HepG2 (cell line): ENCODE measurements at regions of chr7 and their contacts with region 1.

Region 1: GRCh38 chr7:140230861-140231770 is 54.3 kb upstream of the KDM7A start:
- DNase-seq: peak; percentile 93
- ATAC-seq: peak; percentile 78
- H3K4me3 ChIP-seq: peak overlapping the region; percentile 57 to 76 (median 60)
- H3K27ac ChIP-seq: peak overlapping the region; percentile 99
- H3K4me1 ChIP-seq: peaks cover 86% of the 10 kb centered on the region
- H3K27me3 ChIP-seq: no peaks in the 10 kb centered on the region
- CTCF ChIP-seq: peak; percentile 83
- EP300 ChIP-seq: peak in 1 of 2 experiments; percentile 44; a peak in 1 of 4 replicates
- POLR2A ChIP-seq: peak; percentile 43 to 86; a peak in 3 of 4 replicates
- RAD21 ChIP-seq: 0 out of 2 replicates have a peak, but pooled peaks have one; percentile 21

Region 2: GRCh38 chr7:139557857-139558581 is 673.1 kb before region 1 on chr7:
- CTCF ChIA-PET with region 1: no interaction called
- POLR2A ChIA-PET with region 1: no interaction called
- in situ Hi-C with region 1: no loop called
- intact Hi-C with region 1: no loop called
- DNase-seq: no peak
- ATAC-seq: peak; percentile 36
- H3K4me3 ChIP-seq: no peak overlapping the region
- H3K27ac ChIP-seq: no peak overlapping the region
- H3K4me1 ChIP-seq: no peaks in the 10 kb centered on the region
- H3K27me3 ChIP-seq: no peaks in the 10 kb centered on the region
- CTCF ChIP-seq: peak; percentile 44
- EP300 ChIP-seq: no peak
- POLR2A ChIP-seq: no peak
- RAD21 ChIP-seq: no peak

Region 3: GRCh38 chr7:140036224-140036962 is 194.7 kb before region 1 on chr7:
- CTCF ChIA-PET with region 1: no interaction called
- POLR2A ChIA-PET with region 1: no interaction called
- in situ Hi-C with region 1: no loop called
- intact Hi-C with region 1: no loop called
- DNase-seq: no peak
- ATAC-seq: no peak
- H3K4me3 ChIP-seq: no peak overlapping the region
- H3K27ac ChIP-seq: no peak overlapping the region
- H3K4me1 ChIP-seq: no peaks in the 10 kb centered on the region
- H3K27me3 ChIP-seq: no peaks in the 10 kb centered on the region
- CTCF ChIP-seq: no peak
- EP300 ChIP-seq: no peak
- POLR2A ChIP-seq: no peak
- RAD21 ChIP-seq: no peak

Region 4: GRCh38 chr7:140220181-140220522 is 11.0 kb before region 1 on chr7:
- CTCF ChIA-PET with region 1: no interaction called
- POLR2A ChIA-PET with region 1: interaction called, 16 read pairs
- in situ Hi-C with region 1: no loop called
- intact Hi-C with region 1: no loop called
- DNase-seq: no peak
- ATAC-seq: no peak
- H3K4me3 ChIP-seq: no peak overlapping the region
- H3K27ac ChIP-seq: no peak overlapping the region
- H3K4me1 ChIP-seq: peaks cover 67% of the 10 kb centered on the region
- H3K27me3 ChIP-seq: no peaks in the 10 kb centered on the region
- CTCF ChIP-seq: no peak
- EP300 ChIP-seq: no peak
- POLR2A ChIP-seq: no peak
- RAD21 ChIP-seq: no peak

Region 5: GRCh38 chr7:140242057-140243031 is 11.2 kb after region 1 on chr7:
- CTCF ChIA-PET with region 1: no interaction called
- POLR2A ChIA-PET with region 1: interaction called, 16 read pairs
- in situ Hi-C with region 1: no loop called
- intact Hi-C with region 1: no loop called
- DNase-seq: peak; percentile 20
- ATAC-seq: peak; percentile 75
- H3K4me3 ChIP-seq: peak overlapping the region in 2 of 3 experiments; percentile 5 to 32; a peak in 1 of 6 replicates
- H3K27ac ChIP-seq: peak overlapping the region; percentile 49
- H3K4me1 ChIP-seq: peaks cover 84% of the 10 kb centered on the region
- H3K27me3 ChIP-seq: no peaks in the 10 kb centered on the region
- CTCF ChIP-seq: no peak
- EP300 ChIP-seq: no peak
- POLR2A ChIP-seq: no peak
- RAD21 ChIP-seq: no peak

Region 6: GRCh38 chr7:140249036-140249806 is 18.1 kb after region 1 on chr7:
- CTCF ChIA-PET with region 1: no interaction called
- POLR2A ChIA-PET with region 1: interaction called, 64 read pairs
- in situ Hi-C with region 1: no loop called
- intact Hi-C with region 1: loop called (anchors 2 kb)
- DNase-seq: peak; percentile 95
- ATAC-seq: peak; percentile 59
- H3K4me3 ChIP-seq: peak overlapping the region in 1 of 3 experiments; percentile 9; a peak in 1 of 6 replicates
- H3K27ac ChIP-seq: peak overlapping the region; percentile 68
- H3K4me1 ChIP-seq: peaks cover 95% of the 10 kb centered on the region
- H3K27me3 ChIP-seq: no peaks in the 10 kb centered on the region
- CTCF ChIP-seq: no peak
- EP300 ChIP-seq: peak; percentile 70 to 94; a peak in 3 of 4 replicates
- POLR2A ChIP-seq: no peak
- RAD21 ChIP-seq: no peak

Region 7: GRCh38 chr7:140304191-140304799 is 73.2 kb after region 1 on chr7:
- CTCF ChIA-PET with region 1: no interaction called
- POLR2A ChIA-PET with region 1: interaction called, 6 read pairs
- in situ Hi-C with region 1: no loop called
- intact Hi-C with region 1: loop called (anchors 2 kb)
- DNase-seq: peak; percentile 53
- ATAC-seq: peak; percentile 82
- H3K4me3 ChIP-seq: peak overlapping the region in 1 of 3 experiments; percentile 17; a peak in 1 of 6 replicates
- H3K27ac ChIP-seq: no peak overlapping the region
- H3K4me1 ChIP-seq: peaks cover 83% of the 10 kb centered on the region
- H3K27me3 ChIP-seq: no peaks in the 10 kb centered on the region
- CTCF ChIP-seq: peak; percentile 72
- EP300 ChIP-seq: no peak
- POLR2A ChIP-seq: no peak
- RAD21 ChIP-seq: peak; percentile 73

Region 8: GRCh38 chr7:140326116-140326928 is 95.2 kb after region 1 on chr7:
- CTCF ChIA-PET with region 1: no interaction called
- POLR2A ChIA-PET with region 1: interaction called, 4 read pairs
- in situ Hi-C with region 1: no loop called
- intact Hi-C with region 1: loop called (anchors 2 kb)
- DNase-seq: peak; percentile 63
- ATAC-seq: peak; percentile 93
- H3K4me3 ChIP-seq: peak overlapping the region; percentile 33 to 58 (median 49)
- H3K27ac ChIP-seq: no peak overlapping the region
- H3K4me1 ChIP-seq: peaks cover 27% of the 10 kb centered on the region
- H3K27me3 ChIP-seq: no peaks in the 10 kb centered on the region
- CTCF ChIP-seq: peak; percentile 93
- EP300 ChIP-seq: no peak
- POLR2A ChIP-seq: no peak
- RAD21 ChIP-seq: peak; percentile 91

Region 9: GRCh38 chr7:140873434-140873833 is 642.3 kb after region 1 on chr7:
- CTCF ChIA-PET with region 1: no interaction called
- POLR2A ChIA-PET with region 1: no interaction called
- in situ Hi-C with region 1: no loop called
- intact Hi-C with region 1: loop called (anchors 5 kb)
- DNase-seq: no peak
- ATAC-seq: no peak
- H3K4me3 ChIP-seq: no peak overlapping the region
- H3K27ac ChIP-seq: no peak overlapping the region
- H3K4me1 ChIP-seq: peaks cover 1% of the 10 kb centered on the region
- H3K27me3 ChIP-seq: no peaks in the 10 kb centered on the region
- CTCF ChIP-seq: no peak
- EP300 ChIP-seq: no peak
- POLR2A ChIP-seq: no peak
- RAD21 ChIP-seq: no peak